A673 (cell line): ENCODE measurements at regions of chr15 and their contacts with region 1.

Region 1: DNA sequence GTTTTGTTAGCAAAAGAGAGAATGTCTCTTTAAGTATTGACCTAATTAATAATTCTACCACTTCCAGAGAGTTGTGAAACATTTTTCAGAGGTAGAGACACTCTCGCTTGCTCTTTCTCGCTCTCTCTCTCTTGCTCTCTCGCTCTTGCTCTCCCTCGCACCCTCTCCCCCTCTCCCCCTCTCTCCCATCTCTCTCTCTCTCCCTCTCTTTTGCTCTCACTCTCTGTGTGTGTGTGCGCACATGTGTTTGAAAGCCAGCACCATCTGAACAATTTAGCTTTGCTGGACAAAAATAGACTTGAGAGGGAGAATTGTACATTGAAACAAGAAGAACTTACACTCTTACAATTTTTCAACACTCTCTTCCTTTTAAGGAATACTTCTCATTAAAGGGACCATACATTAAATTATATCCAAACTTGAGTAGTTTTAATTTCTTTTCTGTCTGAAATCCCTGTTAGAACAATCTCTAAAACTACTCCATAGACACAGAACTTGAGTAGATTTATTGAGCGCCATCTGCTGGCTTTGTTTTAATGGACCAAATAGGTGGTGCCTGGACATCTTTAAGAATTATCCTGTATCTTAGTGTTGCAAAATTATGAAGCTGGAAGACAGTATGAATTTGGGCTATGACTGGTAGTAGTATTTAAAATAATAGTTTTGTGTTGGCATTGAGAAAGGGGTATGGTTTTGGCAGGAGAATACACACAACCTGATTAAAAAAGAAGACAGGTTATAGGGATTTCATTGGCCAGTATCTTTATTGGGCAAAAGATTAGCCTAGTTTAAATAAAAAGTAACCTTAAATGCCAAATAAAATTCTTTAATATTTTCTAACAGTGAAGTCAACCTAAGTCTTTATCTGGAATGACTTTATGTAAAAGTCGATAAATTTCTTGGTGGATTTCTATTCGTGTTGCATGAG is 124.6 kb downstream of the AKAP13 start:
- DNase-seq: peak; percentile 70
- H3K4me3 ChIP-seq: no peak overlapping the region
- H3K27ac ChIP-seq: no peak overlapping the region
- H3K4me1 ChIP-seq: peaks cover 16% of the 10 kb centered on the region
- H3K27me3 ChIP-seq: no peaks in the 10 kb centered on the region
- CTCF ChIP-seq: peak; percentile 81

Region 2: GRCh38 chr15:85485956-85486567 is 19.0 kb before region 1 on chr15:
- CTCF ChIA-PET with region 1: interaction called, 4 read pairs
- POLR2A ChIA-PET with region 1: no interaction called
- intact Hi-C with region 1: loop called (anchors 2 kb)
- DNase-seq: peak; percentile 82
- H3K4me3 ChIP-seq: no peak overlapping the region
- H3K27ac ChIP-seq: no peak overlapping the region
- H3K4me1 ChIP-seq: peaks cover 35% of the 10 kb centered on the region
- H3K27me3 ChIP-seq: no peaks in the 10 kb centered on the region
- CTCF ChIP-seq: peak; percentile 80

Region 3: GRCh38 chr15:85527895-85528294 is 22.9 kb after region 1 on chr15:
- CTCF ChIA-PET with region 1: interaction called, 13 read pairs
- POLR2A ChIA-PET with region 1: no interaction called
- intact Hi-C with region 1: no loop called
- DNase-seq: peak; percentile 71
- H3K4me3 ChIP-seq: no peak overlapping the region
- H3K27ac ChIP-seq: peak overlapping the region; percentile 73
- H3K4me1 ChIP-seq: peaks cover 47% of the 10 kb centered on the region
- H3K27me3 ChIP-seq: no peaks in the 10 kb centered on the region
- CTCF ChIP-seq: no peak